ENCODE measurements at regions of chr1 and their contacts with region 1.

Region 1: GRCh38 chr1:86018283-86018923 is 138.2 kb downstream of the COL24A1 start:
- DNase-seq: no peak

Region 2: DNA sequence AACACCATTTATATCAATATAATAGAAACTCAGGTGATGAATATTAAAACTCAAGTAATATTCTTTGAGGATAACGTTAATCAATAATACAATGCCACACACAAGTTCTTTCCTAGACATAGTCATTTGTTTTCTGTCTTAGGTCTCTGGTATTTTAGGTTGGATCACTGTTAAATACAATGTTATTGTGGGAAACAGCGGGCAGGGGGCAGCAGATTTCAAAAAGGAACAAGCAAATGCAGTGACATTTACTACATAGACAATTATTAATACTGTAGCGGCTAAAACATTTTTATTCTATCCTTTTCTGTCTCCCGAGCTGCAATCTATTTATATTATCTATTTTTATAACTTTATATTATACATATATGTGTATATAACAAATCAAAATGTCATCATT is 123.8 kb before region 1 on chr1:
- intact Hi-C with region 1: loop called (anchors 10 kb)
- DNase-seq: no peak

Region 3: DNA sequence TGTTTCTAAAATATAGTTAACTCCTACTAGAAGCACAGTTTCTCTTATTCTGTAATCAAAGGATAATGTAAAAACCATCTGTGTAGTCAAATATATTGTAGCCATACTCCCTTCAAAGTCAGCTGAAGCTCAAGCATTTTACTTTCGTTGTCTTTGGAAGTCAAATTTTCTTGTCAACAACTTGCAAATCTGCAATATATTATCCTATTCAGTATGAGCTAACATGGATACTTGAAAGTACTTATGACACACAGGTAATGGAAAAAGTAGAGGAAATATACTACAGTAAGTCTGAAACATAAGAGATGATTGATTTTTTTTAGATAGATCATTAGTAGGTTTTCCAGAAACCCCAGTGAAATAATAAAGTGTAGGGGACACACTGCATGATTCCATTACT is 16.7 kb after region 1 on chr1:
- intact Hi-C with region 1: no loop called
- DNase-seq: no peak

Region 4: DNA sequence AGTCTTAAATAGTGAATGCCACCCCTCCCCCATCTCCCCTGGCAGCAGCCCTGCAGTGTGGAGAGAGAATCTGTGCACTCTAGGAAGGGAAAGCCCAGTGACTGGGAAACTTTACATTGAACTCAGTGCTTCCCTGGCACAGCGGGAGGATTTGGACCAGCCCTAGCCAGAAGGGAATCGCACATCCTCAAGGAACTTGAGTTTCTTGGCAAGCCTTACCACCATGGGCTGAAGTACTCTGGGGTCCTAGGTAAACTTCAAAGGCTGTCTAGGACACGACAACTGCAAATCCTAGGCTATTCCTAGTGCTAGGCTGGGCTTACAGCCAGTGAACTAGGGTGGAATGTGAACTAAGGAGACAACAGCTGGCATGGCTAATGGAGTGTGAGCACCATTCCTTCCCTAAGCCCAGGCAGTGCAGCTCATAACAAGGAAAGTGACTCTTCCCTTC is 49.9 kb after region 1 on chr1:
- intact Hi-C with region 1: no loop called
- DNase-seq: no peak

Region 5: DNA sequence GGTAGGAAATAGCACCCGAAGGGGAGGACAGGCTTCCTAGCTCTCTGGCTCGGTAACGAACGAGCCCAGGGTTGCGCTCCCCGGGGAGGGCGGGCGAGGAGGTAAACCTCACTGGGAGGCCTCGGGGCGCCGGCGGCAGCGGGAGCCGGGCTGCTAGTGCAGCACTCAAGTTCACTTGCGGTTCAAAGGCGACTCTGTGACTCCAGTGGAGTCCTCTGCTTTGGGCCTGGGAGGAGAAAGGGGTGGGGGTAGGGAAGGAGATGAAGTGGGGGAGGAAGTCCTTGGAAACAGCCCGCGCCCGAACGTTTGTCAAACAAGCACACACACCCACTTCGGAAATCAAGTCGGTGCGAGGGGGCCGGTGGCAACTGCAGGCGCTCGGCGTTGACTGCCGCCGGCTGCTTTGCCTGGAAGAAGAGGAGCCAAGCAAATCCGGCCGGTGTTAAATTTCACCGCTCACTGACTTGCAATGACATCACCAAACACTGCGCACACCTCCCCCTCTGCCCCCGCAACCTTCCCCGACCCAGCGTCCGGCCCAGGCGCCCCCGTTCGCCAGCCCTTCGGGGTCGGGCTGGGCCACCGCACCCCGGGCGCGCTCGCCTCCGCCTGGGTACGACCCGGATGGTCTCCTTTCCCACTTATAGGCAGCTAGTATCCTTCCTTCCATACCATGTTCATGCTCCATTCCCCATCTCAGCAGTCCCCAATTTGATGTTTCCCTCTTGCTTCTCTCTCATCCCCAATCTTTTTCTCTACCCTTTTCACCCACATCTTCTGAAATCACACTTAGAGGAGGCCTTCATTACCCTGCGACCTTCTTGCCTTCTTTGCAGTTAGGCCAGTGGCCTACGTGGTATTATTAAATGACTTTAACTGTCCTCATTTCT is 138.4 kb after region 1 on chr1 and contains the start of gene COL24A1:
- intact Hi-C with region 1: no loop called
- DNase-seq: peak; percentile 81
- total RNA-seq, gene COL24A1: 1.3 TPM

Measured in cardiac septum (tissue), 1 donor.